Naive thymus-derived CD4-positive, alpha-beta T cell (primary cell): ENCODE measurements at regions of chr11 and their contacts with region 1.

Region 1: DNA sequence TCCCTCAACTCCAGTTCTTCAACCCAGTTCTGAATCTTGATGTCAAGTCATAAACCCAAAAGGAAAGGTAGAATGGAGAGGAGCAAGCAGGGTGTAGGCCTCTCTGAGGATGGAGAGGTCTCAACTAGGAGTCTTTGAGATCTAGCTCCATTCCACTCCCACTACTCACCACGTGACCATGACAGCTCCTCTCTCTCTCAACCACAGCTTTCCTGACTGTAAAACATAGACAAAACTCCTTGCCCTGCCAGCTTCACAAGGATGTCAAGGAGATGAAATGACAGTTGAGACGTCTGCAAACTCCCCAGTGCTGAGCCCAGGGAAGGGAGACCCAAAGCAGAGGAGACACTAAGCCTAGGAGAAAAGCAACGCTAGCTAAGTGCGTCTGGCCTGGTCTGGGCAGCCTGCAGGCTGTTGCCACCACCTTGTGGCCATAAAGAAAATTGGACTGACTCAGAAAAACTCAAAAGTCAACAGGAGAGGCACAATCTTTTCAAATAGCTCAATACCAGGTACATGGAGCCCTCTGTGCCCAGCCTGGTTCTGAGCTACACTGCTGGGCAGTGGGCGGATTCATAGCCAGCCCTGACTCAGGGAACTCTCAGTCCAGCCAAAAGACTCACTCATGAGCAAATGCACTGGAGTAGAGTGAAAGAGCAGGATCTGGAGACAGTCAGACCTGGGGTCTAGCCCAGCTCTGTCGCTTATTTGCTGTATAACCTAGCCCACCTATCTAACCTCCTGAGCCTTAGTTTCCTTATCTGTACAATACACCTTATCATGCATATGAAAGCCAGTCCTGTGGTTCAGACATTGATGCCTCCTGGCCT is 3.4 kb downstream of the CLPB start:
- DNase-seq: peak; percentile 16 to 61 (median 52)
- ATAC-seq: peak; percentile 25
- H3K4me3 ChIP-seq: no peak overlapping the region
- H3K4me3 Mint-ChIP-seq: peak overlapping the region in 9 of 10 donors; percentile 18 to 70 (median 57)
- H3K27ac ChIP-seq: no peak overlapping the region
- H3K27ac Mint-ChIP-seq: peak overlapping the region; percentile 6 to 84 (median 79)
- H3K4me1 ChIP-seq: peaks cover 12 to 13% of the 10 kb centered on the region in 2 donors
- H3K4me1 Mint-ChIP-seq: peaks cover 18 to 48% (median 40%) of the 10 kb centered on the region in 7 donors
- H3K27me3 ChIP-seq: no peaks in the 10 kb centered on the region
- H3K27me3 Mint-ChIP-seq: no peaks in the 10 kb centered on the region

Region 2: DNA sequence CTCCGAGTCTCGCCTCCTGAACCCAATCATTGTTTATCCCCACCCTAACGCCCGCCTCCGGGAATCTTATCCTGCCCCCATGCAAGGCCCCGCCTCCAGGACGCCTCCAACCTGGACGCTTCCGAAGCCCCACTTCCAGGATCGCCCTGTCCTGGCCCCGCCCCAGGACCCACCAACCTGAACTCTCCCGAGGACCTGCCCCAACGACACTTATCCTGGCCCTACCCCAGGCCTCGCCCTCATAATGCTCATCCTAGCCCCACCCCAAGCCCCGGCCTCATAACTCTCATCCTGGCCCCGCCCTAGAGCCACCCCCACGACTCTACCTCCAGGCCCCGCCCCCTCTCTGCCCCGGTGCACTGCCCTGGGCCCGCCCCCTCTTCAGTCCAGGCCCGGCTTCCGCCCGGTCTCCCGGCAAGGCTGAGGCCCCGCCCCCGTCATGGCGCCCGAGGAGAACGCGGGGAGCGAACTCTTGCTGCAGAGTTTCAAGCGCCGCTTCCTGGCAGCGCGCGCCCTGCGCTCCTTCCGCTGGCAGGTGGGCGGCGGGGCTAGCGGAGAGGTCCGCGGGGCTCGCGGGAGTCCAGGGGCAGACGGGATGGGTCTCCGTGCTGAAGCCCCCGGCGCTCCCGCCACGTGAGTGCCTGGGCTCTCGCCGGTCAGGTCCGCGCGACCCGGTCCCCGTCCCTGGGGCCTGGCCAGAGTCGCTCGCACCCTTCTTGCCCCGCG is 643.7 kb before region 1 on chr11:
- CTCF ChIA-PET with region 1: no interaction called
- POLR2A ChIA-PET with region 1: no interaction called
- intact Hi-C with region 1: loop called in 1 of 2 experiments (anchors 5 kb)
- DNase-seq: peak; percentile 86 to 96 (median 94)
- ATAC-seq: peak; percentile 98
- H3K4me3 ChIP-seq: peak overlapping the region; percentile 86
- H3K4me3 Mint-ChIP-seq: peak overlapping the region; percentile 95 to 100 (median 98)
- H3K27ac ChIP-seq: peak overlapping the region; percentile 93
- H3K27ac Mint-ChIP-seq: peak overlapping the region; percentile 88 to 99 (median 98)
- H3K4me1 ChIP-seq: no peaks in the 10 kb centered on the region
- H3K4me1 Mint-ChIP-seq: peaks cover 0 to 20% (median 12%) of the 10 kb centered on the region in 7 donors
- H3K27me3 ChIP-seq: no peaks in the 10 kb centered on the region
- H3K27me3 Mint-ChIP-seq: peaks cover 0 to 5% (median 0%) of the 10 kb centered on the region in 5 donors

Region 3: GRCh38 chr11:72024069-72024754 is 406.7 kb before region 1 on chr11:
- CTCF ChIA-PET with region 1: no interaction called
- POLR2A ChIA-PET with region 1: no interaction called
- intact Hi-C with region 1: loop called (anchors 1 to 2 kb)
- DNase-seq: no peak
- ATAC-seq: no peak
- H3K4me3 ChIP-seq: no peak overlapping the region
- H3K4me3 Mint-ChIP-seq: no peak overlapping the region
- H3K27ac ChIP-seq: peak overlapping the region; percentile 6
- H3K27ac Mint-ChIP-seq: peak overlapping the region in 5 of 9 donors; percentile 14 to 79 (median 33)
- H3K4me1 ChIP-seq: peaks cover 6 to 13% of the 10 kb centered on the region in 2 donors
- H3K4me1 Mint-ChIP-seq: peaks cover 18 to 47% (median 39%) of the 10 kb centered on the region in 7 donors
- H3K27me3 ChIP-seq: no peaks in the 10 kb centered on the region
- H3K27me3 Mint-ChIP-seq: no peaks in the 10 kb centered on the region

Region 4: GRCh38 chr11:72048766-72049456 is 382.0 kb before region 1 on chr11:
- CTCF ChIA-PET with region 1: no interaction called
- POLR2A ChIA-PET with region 1: no interaction called
- intact Hi-C with region 1: no loop called
- DNase-seq: no peak
- ATAC-seq: no peak
- H3K4me3 ChIP-seq: no peak overlapping the region
- H3K4me3 Mint-ChIP-seq: no peak overlapping the region
- H3K27ac ChIP-seq: no peak overlapping the region
- H3K27ac Mint-ChIP-seq: peak overlapping the region in 2 of 9 donors; percentile 76 to 84
- H3K4me1 ChIP-seq: peaks cover 0 to 6% of the 10 kb centered on the region in 2 donors
- H3K4me1 Mint-ChIP-seq: peaks cover 2 to 23% (median 15%) of the 10 kb centered on the region in 7 donors
- H3K27me3 ChIP-seq: no peaks in the 10 kb centered on the region
- H3K27me3 Mint-ChIP-seq: no peaks in the 10 kb centered on the region

Region 5: GRCh38 chr11:72080256-72080974 is 350.5 kb before region 1 on chr11 and contains the starts of genes LRRC51 and NUMA1:
- CTCF ChIA-PET with region 1: interaction called, 3 read pairs
- POLR2A ChIA-PET with region 1: no interaction called
- intact Hi-C with region 1: loop called (anchors 1 kb)
- DNase-seq: peak; percentile 88 to 100 (median 99)
- ATAC-seq: peak; percentile 94
- H3K4me3 ChIP-seq: peak within 1 kb of the TSS; percentile 88
- H3K4me3 Mint-ChIP-seq: peak within 1 kb of the TSS; percentile 80 to 95 (median 92)
- H3K27ac ChIP-seq: peak within 1 kb of the TSS; percentile 80
- H3K27ac Mint-ChIP-seq: peak within 1 kb of the TSS; percentile 93 to 100 (median 97)
- H3K4me1 ChIP-seq: peaks cover 10% of the 10 kb centered on the region in 2 donors
- H3K4me1 Mint-ChIP-seq: peaks cover 30 to 62% (median 58%) of the 10 kb centered on the region in 7 donors
- H3K27me3 ChIP-seq: no peaks in the 10 kb centered on the region
- H3K27me3 Mint-ChIP-seq: no peaks in the 10 kb centered on the region
- total RNA-seq, gene LRRC51: 1.2 to 7.8 (median 4.6) TPM
- total RNA-seq, gene NUMA1: 216 to 453 (median 266) TPM

Region 6: GRCh38 chr11:72144807-72145560 is 286.0 kb before region 1 on chr11:
- CTCF ChIA-PET with region 1: interaction called, 4 read pairs
- POLR2A ChIA-PET with region 1: no interaction called
- intact Hi-C with region 1: loop called in 1 of 2 experiments (anchors 1 kb)
- DNase-seq: no peak
- ATAC-seq: no peak
- H3K4me3 ChIP-seq: no peak overlapping the region
- H3K4me3 Mint-ChIP-seq: no peak overlapping the region
- H3K27ac ChIP-seq: no peak overlapping the region
- H3K27ac Mint-ChIP-seq: no peak overlapping the region
- H3K4me1 ChIP-seq: no peaks in the 10 kb centered on the region
- H3K4me1 Mint-ChIP-seq: peaks cover 0 to 18% (median 3%) of the 10 kb centered on the region in 7 donors
- H3K27me3 ChIP-seq: no peaks in the 10 kb centered on the region
- H3K27me3 Mint-ChIP-seq: peaks cover 1 to 15% (median 4%) of the 10 kb centered on the region in 5 donors

Region 7: GRCh38 chr11:72238040-72238450 is 192.9 kb before region 1 on chr11:
- CTCF ChIA-PET with region 1: interaction called, 3 read pairs
- POLR2A ChIA-PET with region 1: no interaction called
- intact Hi-C with region 1: loop called in 1 of 2 experiments (anchors 5 kb)
- DNase-seq: peak in 7 of 9 donors; percentile 25 to 47 (median 32)
- ATAC-seq: peak; percentile 69
- H3K4me3 ChIP-seq: no peak overlapping the region
- H3K4me3 Mint-ChIP-seq: peak overlapping the region in 1 of 10 donors; percentile 1
- H3K27ac ChIP-seq: no peak overlapping the region
- H3K27ac Mint-ChIP-seq: no peak overlapping the region
- H3K4me1 ChIP-seq: peaks cover 0 to 15% of the 10 kb centered on the region in 2 donors
- H3K4me1 Mint-ChIP-seq: peaks cover 11 to 33% (median 27%) of the 10 kb centered on the region in 7 donors
- H3K27me3 ChIP-seq: peaks cover 0 to 21% of the 10 kb centered on the region in 2 donors
- H3K27me3 Mint-ChIP-seq: peaks cover 26 to 39% (median 35%) of the 10 kb centered on the region in 5 donors

Region 8: DNA sequence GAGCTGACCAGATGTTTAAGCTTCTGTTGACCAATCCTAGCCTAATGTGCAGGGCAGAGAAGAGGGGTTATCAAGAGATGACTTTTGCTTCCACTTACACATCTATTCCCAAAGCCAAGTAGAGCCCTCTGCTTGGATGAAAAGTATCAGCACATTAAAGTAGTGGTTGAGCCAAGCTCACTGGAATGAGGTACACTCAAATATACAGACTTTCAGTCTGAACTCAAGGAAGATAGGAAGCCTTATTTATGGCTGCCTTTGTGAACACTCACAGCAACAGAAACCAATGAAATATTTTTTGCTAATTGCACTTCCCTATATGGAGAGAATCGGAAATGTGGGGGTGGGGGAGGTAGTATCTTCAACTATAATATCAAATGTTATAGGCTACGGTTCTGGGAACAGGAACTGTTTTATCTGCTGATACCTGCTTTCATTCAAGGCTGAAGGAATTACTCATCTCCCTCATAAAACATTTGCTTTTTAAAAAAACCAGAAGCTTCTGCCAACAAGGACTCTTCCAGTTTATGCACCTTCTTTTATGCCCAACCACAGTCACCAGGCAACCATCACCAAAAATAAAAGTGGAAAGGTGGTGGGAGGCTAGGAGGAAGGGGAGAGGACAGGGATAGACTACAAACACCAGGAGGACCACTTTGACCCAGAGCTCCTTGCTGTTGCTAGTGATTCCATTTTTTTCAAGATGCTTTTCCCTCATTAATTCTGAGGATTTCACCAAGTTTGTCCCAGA is 87.8 kb before region 1 on chr11:
- CTCF ChIA-PET with region 1: no interaction called
- POLR2A ChIA-PET with region 1: no interaction called
- intact Hi-C with region 1: no loop called
- DNase-seq: no peak
- ATAC-seq: no peak
- H3K4me3 ChIP-seq: no peak overlapping the region
- H3K4me3 Mint-ChIP-seq: no peak overlapping the region
- H3K27ac ChIP-seq: no peak overlapping the region
- H3K27ac Mint-ChIP-seq: no peak overlapping the region
- H3K4me1 ChIP-seq: no peaks in the 10 kb centered on the region
- H3K4me1 Mint-ChIP-seq: peaks cover 0 to 6% (median 3%) of the 10 kb centered on the region in 7 donors
- H3K27me3 ChIP-seq: no peaks in the 10 kb centered on the region
- H3K27me3 Mint-ChIP-seq: no peaks in the 10 kb centered on the region

Region 9: GRCh38 chr11:72413914-72414628 is 16.9 kb before region 1 on chr11:
- CTCF ChIA-PET with region 1: interaction called, 23 read pairs
- POLR2A ChIA-PET with region 1: no interaction called
- intact Hi-C with region 1: loop called (anchors 1 kb)
- DNase-seq: peak; percentile 49 to 79 (median 68)
- ATAC-seq: peak; percentile 79
- H3K4me3 ChIP-seq: no peak overlapping the region
- H3K4me3 Mint-ChIP-seq: no peak overlapping the region
- H3K27ac ChIP-seq: no peak overlapping the region
- H3K27ac Mint-ChIP-seq: peak overlapping the region in 4 of 9 donors; percentile 2 to 50 (median 22)
- H3K4me1 ChIP-seq: peaks cover 0 to 2% of the 10 kb centered on the region in 2 donors
- H3K4me1 Mint-ChIP-seq: peaks cover 17 to 48% (median 39%) of the 10 kb centered on the region in 7 donors
- H3K27me3 ChIP-seq: no peaks in the 10 kb centered on the region
- H3K27me3 Mint-ChIP-seq: no peaks in the 10 kb centered on the region